CD8-positive, alpha-beta T cell (primary cell): ENCODE measurements at regions of chr9 and their contacts with region 1.

Region 1: DNA sequence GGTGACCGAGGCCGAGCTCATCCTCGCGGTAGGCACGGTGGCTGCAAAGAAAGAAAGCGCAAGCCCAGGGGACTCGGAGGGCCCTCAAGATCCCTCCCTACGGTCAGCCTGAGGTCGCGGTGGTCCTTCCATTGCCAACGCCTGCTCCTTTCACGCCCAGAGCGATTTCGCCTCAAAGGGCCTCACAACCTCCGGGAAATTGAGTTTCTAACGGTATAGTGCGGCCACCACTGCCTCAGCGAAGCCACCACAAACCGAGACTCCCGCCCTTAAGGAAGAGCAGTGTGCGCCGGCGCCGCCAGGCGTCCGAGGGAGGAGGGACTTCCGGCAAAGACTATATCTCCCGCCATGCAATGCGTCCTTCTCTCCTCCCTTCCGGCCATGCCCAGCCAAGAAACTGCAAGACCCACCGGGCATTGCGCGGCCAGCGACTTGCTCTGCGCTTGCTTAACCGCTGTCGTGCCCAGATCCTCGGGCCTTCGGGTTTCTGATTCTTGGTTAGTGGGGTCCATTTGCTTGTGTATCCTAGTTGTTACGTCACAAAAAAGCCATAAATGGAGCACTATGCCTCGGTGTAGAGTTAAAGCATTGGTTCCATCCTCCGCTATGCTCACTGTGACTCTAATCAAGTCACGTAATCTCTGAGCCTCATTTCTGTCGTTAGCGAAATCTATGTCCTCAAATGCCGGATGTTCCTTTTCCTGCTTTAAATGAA is at the start of gene HAUS6:
- DNase-seq: peak; percentile 73 to 98 (median 92)
- ATAC-seq: peak; percentile 92
- H3K4me3 ChIP-seq: peak within 1 kb of the TSS; percentile 51 to 71
- H3K4me3 Mint-ChIP-seq: peak within 1 kb of the TSS; percentile 96
- H3K27ac ChIP-seq: peak within 1 kb of the TSS; percentile 58 to 83
- H3K27ac Mint-ChIP-seq: peak within 1 kb of the TSS; percentile 94
- H3K4me1 ChIP-seq: peaks cover 19% of the 10 kb centered on the region
- H3K4me1 Mint-ChIP-seq: peaks cover 29% of the 10 kb centered on the region
- H3K27me3 ChIP-seq: no peaks in the 10 kb centered on the region
- H3K27me3 Mint-ChIP-seq: no peaks in the 10 kb centered on the region
- CTCF ChIP-seq: no peak
- total RNA-seq, gene HAUS6: 14.2 to 16.5 TPM

Region 2: DNA sequence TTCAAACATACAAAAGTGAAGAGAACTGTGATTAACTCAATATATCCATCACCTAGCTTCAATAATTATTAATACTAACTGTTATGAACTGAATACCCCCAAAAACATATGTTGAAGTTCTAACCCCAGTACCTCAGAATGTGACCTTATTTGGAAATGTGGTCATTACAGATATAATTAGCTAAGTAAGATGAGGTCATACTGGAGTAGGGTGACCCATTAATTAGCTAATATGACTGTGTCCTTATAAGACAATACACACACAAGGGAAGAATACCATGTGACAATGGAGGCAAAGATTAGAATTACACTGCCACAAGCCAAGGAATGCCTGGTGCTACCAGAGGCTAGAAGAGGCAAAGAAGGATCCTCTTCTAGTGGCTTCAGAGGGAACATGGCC is 45.8 kb before region 1 on chr9:
- CTCF ChIA-PET with region 1: no interaction called
- POLR2A ChIA-PET with region 1: no interaction called
- intact Hi-C with region 1: no loop called
- DNase-seq: no peak
- ATAC-seq: no peak
- H3K4me3 ChIP-seq: no peak overlapping the region
- H3K4me3 Mint-ChIP-seq: no peak overlapping the region
- H3K27ac ChIP-seq: no peak overlapping the region
- H3K27ac Mint-ChIP-seq: no peak overlapping the region
- H3K4me1 ChIP-seq: peaks cover 3% of the 10 kb centered on the region
- H3K4me1 Mint-ChIP-seq: peaks cover 11% of the 10 kb centered on the region
- H3K27me3 ChIP-seq: no peaks in the 10 kb centered on the region
- H3K27me3 Mint-ChIP-seq: no peaks in the 10 kb centered on the region
- CTCF ChIP-seq: no peak

Region 3: DNA sequence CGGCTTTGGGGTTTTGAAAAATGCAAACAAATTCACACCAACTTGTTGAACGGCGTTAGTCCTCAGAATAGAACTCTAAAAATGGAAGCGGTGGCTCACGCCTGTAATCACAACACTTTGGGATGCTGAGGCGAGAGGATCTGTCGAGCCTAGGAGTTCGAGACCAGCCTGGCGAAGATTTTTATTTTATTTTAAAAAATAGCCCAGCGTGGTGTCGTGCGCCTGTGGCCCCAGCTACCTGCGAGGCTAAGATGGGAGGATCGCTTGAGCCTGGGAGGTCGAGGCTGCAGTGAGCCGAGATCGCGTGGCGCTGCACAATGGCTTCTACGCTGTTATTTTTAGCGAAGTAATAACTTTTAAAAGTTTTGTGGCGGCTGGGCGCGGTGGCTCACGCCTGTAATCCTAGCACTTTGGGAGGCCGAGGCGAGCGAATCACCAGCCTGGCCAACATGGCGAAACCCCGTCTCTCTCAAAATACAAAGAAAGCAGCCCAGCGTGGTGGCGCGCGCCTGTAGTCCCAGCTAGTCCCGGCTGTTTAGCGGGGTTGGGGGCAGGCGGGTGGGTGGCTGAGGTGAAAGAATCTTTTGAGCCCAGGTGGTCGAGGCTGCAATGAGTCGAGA is 25.2 kb after region 1 on chr9:
- CTCF ChIA-PET with region 1: interaction called, 9 read pairs
- POLR2A ChIA-PET with region 1: interaction called, 4 read pairs
- intact Hi-C with region 1: loop called (anchors 1 to 2 kb)
- DNase-seq: peak in 7 of 9 experiments; percentile 7 to 68 (median 46)
- ATAC-seq: peak; percentile 19
- H3K4me3 ChIP-seq: peak overlapping the region; percentile 62 to 70
- H3K4me3 Mint-ChIP-seq: peak overlapping the region; percentile 93
- H3K27ac ChIP-seq: peak overlapping the region; percentile 83 to 91
- H3K27ac Mint-ChIP-seq: peak overlapping the region; percentile 94
- H3K4me1 ChIP-seq: peaks cover 48% of the 10 kb centered on the region
- H3K4me1 Mint-ChIP-seq: peaks cover 53% of the 10 kb centered on the region
- H3K27me3 ChIP-seq: no peaks in the 10 kb centered on the region
- H3K27me3 Mint-ChIP-seq: no peaks in the 10 kb centered on the region
- CTCF ChIP-seq: no peak

Region 4: DNA sequence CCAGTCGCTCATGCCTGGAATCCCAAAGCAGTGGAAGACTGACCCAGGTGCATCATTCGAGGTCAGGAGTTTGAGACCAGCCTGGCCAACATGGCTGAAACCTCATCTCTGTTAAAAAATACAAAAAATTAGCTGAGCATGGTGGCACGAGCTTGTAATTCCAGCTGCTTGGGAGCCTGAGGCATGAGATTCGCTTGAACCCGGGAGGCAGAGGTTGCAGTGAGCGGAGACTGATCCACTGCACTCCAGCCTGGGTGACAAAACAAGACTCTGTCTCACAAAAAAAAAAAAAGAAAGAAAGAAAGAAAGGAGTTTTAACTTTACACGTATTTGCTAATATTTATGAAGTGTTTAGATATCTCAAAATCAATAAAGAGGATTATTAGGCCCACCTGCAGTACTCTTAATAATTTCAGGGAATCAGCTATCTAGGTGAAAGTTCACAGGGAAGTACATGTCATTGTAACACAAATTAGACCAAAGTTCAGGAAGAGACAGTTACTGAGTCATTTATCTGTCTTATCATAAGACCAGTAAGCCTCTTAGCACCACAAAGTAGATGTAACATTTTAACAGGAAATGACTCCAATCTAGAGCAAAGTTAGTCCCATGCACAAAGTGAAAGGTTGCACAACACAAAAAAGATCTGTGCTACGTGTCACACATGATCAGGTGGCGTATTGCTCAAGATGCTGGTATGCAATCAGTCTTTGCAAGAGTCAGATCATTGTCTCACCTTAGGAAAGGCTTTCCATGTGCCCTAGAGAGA is 58.7 kb after region 1 on chr9:
- CTCF ChIA-PET with region 1: no interaction called
- POLR2A ChIA-PET with region 1: no interaction called
- intact Hi-C with region 1: loop called in 1 of 2 experiments (anchors 1 kb)
- DNase-seq: peak in 7 of 9 experiments; percentile 22 to 85 (median 46)
- ATAC-seq: peak; percentile 96
- H3K4me3 ChIP-seq: no peak overlapping the region
- H3K4me3 Mint-ChIP-seq: peak overlapping the region; percentile 40
- H3K27ac ChIP-seq: peak overlapping the region; percentile 29 to 95
- H3K27ac Mint-ChIP-seq: peak overlapping the region; percentile 81
- H3K4me1 ChIP-seq: peaks cover 16% of the 10 kb centered on the region
- H3K4me1 Mint-ChIP-seq: peaks cover 21% of the 10 kb centered on the region
- H3K27me3 ChIP-seq: no peaks in the 10 kb centered on the region
- H3K27me3 Mint-ChIP-seq: no peaks in the 10 kb centered on the region
- CTCF ChIP-seq: no peak

Region 5: GRCh38 chr9:19184144-19184917 is 81.5 kb after region 1 on chr9:
- CTCF ChIA-PET with region 1: no interaction called
- POLR2A ChIA-PET with region 1: interaction called, 4 read pairs
- intact Hi-C with region 1: loop called in 1 of 2 experiments (anchors 1 kb)
- DNase-seq: peak; percentile 49 to 94 (median 82)
- ATAC-seq: peak; percentile 99
- H3K4me3 ChIP-seq: peak overlapping the region in 1 of 2 experiments; percentile 3
- H3K4me3 Mint-ChIP-seq: peak overlapping the region; percentile 71
- H3K27ac ChIP-seq: peak overlapping the region; percentile 55 to 87
- H3K27ac Mint-ChIP-seq: peak overlapping the region; percentile 96
- H3K4me1 ChIP-seq: peaks cover 34% of the 10 kb centered on the region
- H3K4me1 Mint-ChIP-seq: peaks cover 25% of the 10 kb centered on the region
- H3K27me3 ChIP-seq: no peaks in the 10 kb centered on the region
- H3K27me3 Mint-ChIP-seq: no peaks in the 10 kb centered on the region
- CTCF ChIP-seq: no peak

Region 6: DNA sequence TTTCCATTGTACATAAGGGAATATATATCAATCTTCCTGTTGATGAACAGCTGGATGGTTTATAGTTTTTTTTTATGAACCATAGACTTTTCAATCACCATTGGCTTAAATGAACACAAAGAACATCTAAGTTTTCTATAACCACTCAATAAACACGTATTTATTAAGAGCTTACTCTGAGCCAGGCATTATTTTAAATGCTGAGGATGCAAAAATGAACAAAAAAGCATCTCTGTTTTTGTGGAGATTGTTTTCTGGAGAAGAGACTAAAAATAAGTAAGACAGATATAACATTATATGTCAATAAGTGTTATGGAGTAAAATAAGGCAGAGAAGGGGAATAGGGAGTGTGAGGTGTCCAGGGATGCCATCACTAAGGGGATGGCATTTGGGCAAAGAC is 738.2 kb after region 1 on chr9:
- CTCF ChIA-PET with region 1: no interaction called
- POLR2A ChIA-PET with region 1: no interaction called
- intact Hi-C with region 1: no loop called
- DNase-seq: no peak
- ATAC-seq: no peak
- H3K4me3 ChIP-seq: no peak overlapping the region
- H3K4me3 Mint-ChIP-seq: no peak overlapping the region
- H3K27ac ChIP-seq: no peak overlapping the region
- H3K27ac Mint-ChIP-seq: no peak overlapping the region
- H3K4me1 ChIP-seq: no peaks in the 10 kb centered on the region
- H3K4me1 Mint-ChIP-seq: no peaks in the 10 kb centered on the region
- H3K27me3 ChIP-seq: no peaks in the 10 kb centered on the region
- H3K27me3 Mint-ChIP-seq: no peaks in the 10 kb centered on the region
- CTCF ChIP-seq: no peak